ENCODE measurements at regions of chr17 and their contacts with region 1.

Region 1: DNA sequence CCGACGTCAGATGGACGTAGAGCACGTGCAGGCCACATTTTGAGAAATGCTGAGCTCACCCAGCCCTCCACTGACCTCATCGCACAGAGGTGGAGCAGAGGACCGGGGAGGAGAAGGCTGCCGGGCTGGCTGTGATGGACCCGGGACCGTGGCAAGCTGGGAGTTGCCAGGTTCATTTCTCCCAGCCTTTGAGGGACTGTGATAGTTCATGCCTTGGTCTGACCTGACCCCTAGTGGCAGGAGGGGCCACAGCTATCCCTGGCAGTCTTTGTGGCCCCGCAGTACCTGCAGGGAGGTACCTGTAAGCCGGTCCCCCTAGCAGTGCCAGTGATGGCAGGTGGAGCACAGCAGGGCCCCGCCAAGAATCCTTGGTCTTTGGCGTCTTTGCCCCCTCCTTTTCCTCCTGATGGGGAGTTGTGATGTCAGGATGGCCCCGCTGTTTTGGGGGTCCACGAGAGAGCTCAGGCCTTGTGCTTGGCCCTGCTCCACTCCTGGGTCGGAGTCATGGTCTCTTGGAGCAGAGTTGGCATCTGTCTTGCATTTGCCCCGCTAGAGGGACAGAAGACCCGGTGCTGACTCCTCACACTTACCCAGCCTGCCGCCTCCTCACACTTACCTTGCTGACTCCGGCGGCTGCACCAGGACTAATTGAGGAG is 50.4 kb downstream of the OR1D5 start:
- DNase-seq: peak; percentile 62 to 82
- H3K4me3 ChIP-seq: no peak overlapping the region
- H3K27ac ChIP-seq: no peak overlapping the region
- H3K4me1 ChIP-seq: no peaks in the 10 kb centered on the region
- H3K27me3 ChIP-seq: no peaks in the 10 kb centered on the region
- CTCF ChIP-seq: peak; percentile 88 to 98 (median 94)
- EP300 ChIP-seq: no peak
- POLR2A ChIP-seq: no peak
- RAD21 ChIP-seq: peak; percentile 97 to 98

Region 2: GRCh38 chr17:2853111-2853721 is 159.8 kb before region 1 on chr17:
- CTCF ChIA-PET with region 1: interaction called, 66 read pairs
- POLR2A ChIA-PET with region 1: no interaction called
- DNase-seq: peak in 1 of 2 experiments; percentile 76
- H3K4me3 ChIP-seq: peak overlapping the region; percentile 51 to 90 (median 80)
- H3K27ac ChIP-seq: no peak overlapping the region
- H3K4me1 ChIP-seq: peaks cover 12 to 32% (median 22%) of the 10 kb centered on the region in 4 experiments
- H3K27me3 ChIP-seq: peaks cover 0 to 5% (median 2%) of the 10 kb centered on the region in 4 experiments; a peak in 2 of 7 replicates
- CTCF ChIP-seq: no peak
- EP300 ChIP-seq: no peak
- POLR2A ChIP-seq: no peak
- RAD21 ChIP-seq: no peak

Region 3: DNA sequence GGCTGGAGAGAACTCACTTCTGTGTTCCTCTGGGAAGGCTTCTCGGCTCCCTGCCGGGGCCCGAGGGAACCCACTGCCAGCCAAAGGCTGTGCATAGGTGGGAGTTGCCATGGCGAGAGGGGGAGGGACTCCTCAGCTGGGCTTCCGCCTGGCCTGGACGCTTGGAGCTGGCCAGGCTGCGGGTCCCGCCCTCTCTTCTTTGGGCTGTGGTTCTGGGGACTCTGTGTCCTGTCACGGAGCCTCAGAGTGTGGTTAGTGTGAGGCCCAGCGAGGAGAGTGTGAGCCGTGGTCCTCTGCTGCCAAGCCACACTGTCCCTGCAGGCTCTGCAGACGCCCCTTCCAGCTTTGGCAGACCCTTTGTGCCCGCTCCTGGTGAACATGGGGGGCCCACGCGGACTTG is 72.7 kb before region 1 on chr17:
- CTCF ChIA-PET with region 1: interaction called, 14 read pairs
- POLR2A ChIA-PET with region 1: no interaction called
- DNase-seq: no peak
- H3K4me3 ChIP-seq: no peak overlapping the region
- H3K27ac ChIP-seq: no peak overlapping the region
- H3K4me1 ChIP-seq: peaks cover 0 to 7% (median 4%) of the 10 kb centered on the region in 4 experiments; a peak in 3 of 7 replicates
- H3K27me3 ChIP-seq: no peaks in the 10 kb centered on the region
- CTCF ChIP-seq: no peak
- EP300 ChIP-seq: no peak
- POLR2A ChIP-seq: no peak
- RAD21 ChIP-seq: no peak

Region 4: DNA sequence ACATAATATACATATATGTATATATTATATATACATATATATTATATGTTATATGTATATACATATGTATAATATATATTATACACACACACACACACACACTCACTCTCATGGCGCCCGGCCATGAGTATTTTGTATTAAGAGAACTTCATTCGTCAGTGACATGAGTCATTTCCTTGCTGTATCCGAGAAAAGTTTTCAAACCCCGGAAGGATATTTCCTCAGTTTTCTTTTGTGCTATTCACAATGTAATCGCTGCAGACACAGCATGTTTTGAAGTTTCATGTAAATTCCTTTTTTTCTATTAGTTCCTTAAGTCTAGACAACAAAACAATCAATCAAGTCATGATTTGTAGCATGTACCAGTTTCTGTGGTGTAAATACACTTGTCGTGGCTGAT is 17.0 kb after region 1 on chr17:
- CTCF ChIA-PET with region 1: interaction called, 15 read pairs
- POLR2A ChIA-PET with region 1: interaction called, 3 read pairs
- DNase-seq: no peak
- H3K4me3 ChIP-seq: no peak overlapping the region
- H3K27ac ChIP-seq: no peak overlapping the region
- H3K4me1 ChIP-seq: no peaks in the 10 kb centered on the region; a peak in 1 of 7 replicates
- H3K27me3 ChIP-seq: no peaks in the 10 kb centered on the region
- CTCF ChIP-seq: no peak
- EP300 ChIP-seq: no peak
- POLR2A ChIP-seq: no peak
- RAD21 ChIP-seq: no peak

Region 5: DNA sequence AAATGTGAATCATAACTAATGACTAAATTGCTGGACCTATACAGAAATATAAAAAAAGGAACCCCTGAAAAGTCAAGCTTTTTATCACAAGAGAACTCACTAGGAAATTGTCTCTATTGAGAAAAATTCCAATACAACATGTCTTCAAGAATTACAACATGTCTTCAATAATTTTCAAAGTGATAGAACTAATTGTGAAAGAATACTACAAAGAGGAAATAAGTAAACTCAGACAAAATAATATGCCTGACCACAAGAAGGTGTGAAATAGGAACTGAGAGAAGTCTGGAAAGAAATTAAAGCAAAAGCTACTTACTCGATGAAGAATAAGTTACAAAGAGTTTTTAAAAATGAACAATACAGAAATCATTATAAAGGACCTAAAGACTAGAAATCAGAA is 144.2 kb after region 1 on chr17:
- CTCF ChIA-PET with region 1: no interaction called
- POLR2A ChIA-PET with region 1: no interaction called
- DNase-seq: no peak
- H3K4me3 ChIP-seq: no peak overlapping the region
- H3K27ac ChIP-seq: no peak overlapping the region
- H3K4me1 ChIP-seq: peaks cover 0 to 3% (median 0%) of the 10 kb centered on the region in 4 experiments; a peak in 1 of 7 replicates
- H3K27me3 ChIP-seq: no peaks in the 10 kb centered on the region
- CTCF ChIP-seq: no peak
- EP300 ChIP-seq: no peak
- POLR2A ChIP-seq: no peak
- RAD21 ChIP-seq: no peak